Endothelial cell of umbilical vein (primary cell): ENCODE measurements at regions of chr3 and their contacts with region 1.

Region 1: DNA sequence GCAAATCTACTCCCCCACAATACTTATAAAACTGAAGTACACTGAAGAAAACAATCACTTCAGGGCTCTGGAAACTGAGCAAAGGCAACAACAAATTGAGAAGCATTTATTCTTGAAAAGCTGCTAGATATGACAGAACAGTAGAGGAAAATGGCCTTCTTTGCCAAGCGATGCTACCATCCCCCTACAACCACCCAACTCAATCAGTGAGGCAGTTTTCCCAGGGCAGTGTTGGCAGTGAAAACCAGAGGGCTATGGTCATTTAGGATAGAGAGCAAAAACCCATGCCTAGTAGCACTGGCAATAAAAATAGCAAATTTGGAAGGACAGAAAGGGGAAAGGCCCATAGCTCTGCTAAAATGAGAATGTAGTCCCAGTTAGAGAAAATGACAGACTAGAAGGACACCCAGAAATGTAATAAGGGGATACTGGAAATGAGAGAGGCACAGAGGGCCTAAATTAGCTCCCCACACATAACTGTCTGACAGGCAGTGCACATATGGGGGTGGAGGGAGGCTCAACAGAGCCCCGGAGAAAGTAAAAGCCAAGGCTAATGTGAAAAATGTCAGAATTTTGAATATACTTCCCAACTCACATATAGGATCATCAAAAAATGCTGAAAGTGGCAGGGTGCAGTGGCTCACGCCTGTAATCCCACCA is 143.5 kb downstream of the GSK3B start:
- DNase-seq: no peak
- H3K4me3 ChIP-seq: no peak overlapping the region
- H3K27ac ChIP-seq: no peak overlapping the region
- H3K4me1 ChIP-seq: no peaks in the 10 kb centered on the region
- H3K27me3 ChIP-seq: no peaks in the 10 kb centered on the region
- CTCF ChIP-seq: no peak
- POLR2A ChIP-seq: no peak

Region 2: GRCh38 chr3:119912220-119912619 is 38.6 kb before region 1 on chr3:
- CTCF ChIA-PET with region 1: no interaction called
- POLR2A ChIA-PET with region 1: no interaction called
- dilution Hi-C with region 1: no loop called
- intact Hi-C with region 1: no loop called
- DNase-seq: no peak
- H3K4me3 ChIP-seq: no peak overlapping the region
- H3K27ac ChIP-seq: no peak overlapping the region
- H3K4me1 ChIP-seq: no peaks in the 10 kb centered on the region
- H3K27me3 ChIP-seq: no peaks in the 10 kb centered on the region
- CTCF ChIP-seq: no peak
- POLR2A ChIP-seq: no peak

Region 3: DNA sequence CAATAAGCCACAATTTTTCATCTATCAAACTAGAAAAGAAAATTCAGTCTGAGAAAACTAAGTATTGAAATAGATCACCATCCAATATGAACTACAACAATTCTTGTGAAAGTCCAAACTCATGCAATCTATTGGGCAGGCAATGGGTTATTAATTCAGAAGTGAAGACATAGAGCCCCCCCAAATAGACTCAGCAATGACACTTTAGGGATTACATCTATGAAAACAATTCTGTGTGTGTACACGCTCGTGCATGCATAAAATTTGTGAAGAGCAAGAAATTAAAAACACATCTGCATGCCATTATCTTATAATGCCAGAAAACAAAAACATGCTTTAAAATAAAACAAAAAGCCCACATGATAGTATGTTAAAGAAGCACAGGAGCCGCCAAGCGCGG is 17.6 kb before region 1 on chr3:
- CTCF ChIA-PET with region 1: interaction called, 3 read pairs
- POLR2A ChIA-PET with region 1: no interaction called
- dilution Hi-C with region 1: no loop called
- intact Hi-C with region 1: loop called (anchors 2 kb)
- DNase-seq: no peak
- H3K4me3 ChIP-seq: no peak overlapping the region
- H3K27ac ChIP-seq: no peak overlapping the region
- H3K4me1 ChIP-seq: no peaks in the 10 kb centered on the region
- H3K27me3 ChIP-seq: no peaks in the 10 kb centered on the region
- CTCF ChIP-seq: no peak
- POLR2A ChIP-seq: no peak